ENCODE measurements at regions of chr11 and their contacts with region 1.

Region 1: GRCh38 chr11:68459886-68460740 is 439 bp upstream of the PPP6R3 start:
- DNase-seq: peak; percentile 97
- ATAC-seq: peak; percentile 93
- H3K4me3 Mint-ChIP-seq: peak overlapping the region; percentile 86
- H3K27ac Mint-ChIP-seq: peak overlapping the region; percentile 89
- H3K4me1 Mint-ChIP-seq: peaks cover 31% of the 10 kb centered on the region
- H3K27me3 Mint-ChIP-seq: no peaks in the 10 kb centered on the region

Region 2: GRCh38 chr11:68030318-68031138 is 429.6 kb before region 1 on chr11 and contains the start of gene NDUFS8:
- CTCF ChIA-PET with region 1: no interaction called
- POLR2A ChIA-PET with region 1: no interaction called
- intact Hi-C with region 1: loop called in 1 of 2 experiments (anchors 1 kb)
- DNase-seq: peak; percentile 97
- ATAC-seq: peak; percentile 99
- H3K4me3 Mint-ChIP-seq: peak within 1 kb of the TSS; percentile 96
- H3K27ac Mint-ChIP-seq: peak within 1 kb of the TSS; percentile 95
- H3K4me1 Mint-ChIP-seq: peaks cover 26% of the 10 kb centered on the region
- H3K27me3 Mint-ChIP-seq: no peaks in the 10 kb centered on the region
- total RNA-seq, gene NDUFS8: 108 to 113 TPM

Region 3: DNA sequence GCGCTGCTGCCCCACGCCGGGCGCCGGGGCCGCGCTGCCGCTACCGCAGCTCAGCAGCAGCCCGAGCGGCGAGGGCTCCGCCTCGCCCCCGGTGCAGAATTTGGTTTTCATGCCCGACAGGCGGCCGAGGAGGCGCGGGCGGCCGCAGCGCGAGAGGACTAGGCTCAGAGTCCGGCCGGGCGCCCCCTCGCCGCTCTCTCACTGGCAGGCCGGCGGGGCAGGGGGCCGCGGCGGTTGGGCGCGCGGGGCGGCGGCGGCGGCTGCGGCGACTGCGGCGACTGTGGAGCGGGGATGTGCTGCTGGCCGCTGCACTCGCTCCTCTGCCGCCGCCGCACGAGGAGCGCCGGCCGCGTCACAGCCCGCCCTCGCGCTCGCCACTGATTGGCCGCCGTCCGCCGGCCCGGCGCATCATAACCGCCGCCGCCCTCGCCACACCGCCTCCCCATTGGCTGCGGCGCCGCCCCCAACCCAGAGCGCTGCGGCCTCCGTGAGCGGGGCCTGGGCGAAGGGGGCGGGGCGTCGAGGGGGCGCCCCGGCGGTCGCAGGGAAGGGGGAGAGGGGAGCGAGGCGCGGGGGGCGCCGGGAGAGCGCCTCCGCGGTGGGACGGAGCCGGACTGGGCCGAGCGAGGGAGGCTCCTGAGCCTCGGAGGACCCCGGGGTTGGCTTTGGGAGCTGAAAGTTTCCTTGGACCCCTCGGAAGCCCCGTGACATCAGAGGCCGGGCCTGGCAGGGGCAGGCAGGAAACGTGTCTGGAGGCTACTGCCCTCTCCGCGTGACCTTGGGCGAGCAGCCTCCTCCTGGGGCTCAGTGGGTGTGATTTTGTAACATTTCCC is 338.8 kb before region 1 on chr11 and contains the start of gene CHKA:
- CTCF ChIA-PET with region 1: no interaction called
- POLR2A ChIA-PET with region 1: no interaction called
- intact Hi-C with region 1: loop called in 1 of 2 experiments (anchors 2 kb)
- DNase-seq: peak; percentile 94
- ATAC-seq: peak; percentile 97
- H3K4me3 Mint-ChIP-seq: peak within 1 kb of the TSS; percentile 71
- H3K27ac Mint-ChIP-seq: peak within 1 kb of the TSS; percentile 68
- H3K4me1 Mint-ChIP-seq: peaks cover 7% of the 10 kb centered on the region
- H3K27me3 Mint-ChIP-seq: no peaks in the 10 kb centered on the region
- total RNA-seq, gene CHKA: 5.5 to 7.5 TPM

Region 4: GRCh38 chr11:68471360-68472340 is 11.5 kb after region 1 on chr11:
- CTCF ChIA-PET with region 1: interaction called, 5 read pairs
- POLR2A ChIA-PET with region 1: interaction called, 6 read pairs
- intact Hi-C with region 1: loop called in 1 of 2 experiments (anchors 1 kb)
- DNase-seq: peak; percentile 86
- ATAC-seq: peak; percentile 74
- H3K4me3 Mint-ChIP-seq: peak overlapping the region; percentile 55
- H3K27ac Mint-ChIP-seq: peak overlapping the region; percentile 81
- H3K4me1 Mint-ChIP-seq: peaks cover 77% of the 10 kb centered on the region
- H3K27me3 Mint-ChIP-seq: no peaks in the 10 kb centered on the region

Region 5: GRCh38 chr11:68546555-68546954 is 86.4 kb after region 1 on chr11:
- CTCF ChIA-PET with region 1: no interaction called
- POLR2A ChIA-PET with region 1: no interaction called
- intact Hi-C with region 1: loop called in 1 of 2 experiments (anchors 5 kb)
- DNase-seq: peak; percentile 31
- ATAC-seq: peak; percentile 48
- H3K4me3 Mint-ChIP-seq: no peak overlapping the region
- H3K27ac Mint-ChIP-seq: peak overlapping the region; percentile 66
- H3K4me1 Mint-ChIP-seq: peaks cover 72% of the 10 kb centered on the region
- H3K27me3 Mint-ChIP-seq: no peaks in the 10 kb centered on the region

Region 6: GRCh38 chr11:69675811-69676371 is 1215.8 kb after region 1 on chr11:
- CTCF ChIA-PET with region 1: no interaction called
- POLR2A ChIA-PET with region 1: no interaction called
- intact Hi-C with region 1: loop called in 1 of 2 experiments (anchors 1 kb)
- DNase-seq: no peak
- ATAC-seq: no peak
- H3K4me3 Mint-ChIP-seq: peak overlapping the region; percentile 89
- H3K27ac Mint-ChIP-seq: no peak overlapping the region
- H3K4me1 Mint-ChIP-seq: peaks cover 20% of the 10 kb centered on the region
- H3K27me3 Mint-ChIP-seq: peaks cover 2% of the 10 kb centered on the region

Measured in activated CD4-positive, alpha-beta T cell treated with anti-CD3 and anti-CD28 coated beads for 36 hours (primary cell).